ENCODE measurements at regions of chr7 and their contacts with region 1.

Region 1: DNA sequence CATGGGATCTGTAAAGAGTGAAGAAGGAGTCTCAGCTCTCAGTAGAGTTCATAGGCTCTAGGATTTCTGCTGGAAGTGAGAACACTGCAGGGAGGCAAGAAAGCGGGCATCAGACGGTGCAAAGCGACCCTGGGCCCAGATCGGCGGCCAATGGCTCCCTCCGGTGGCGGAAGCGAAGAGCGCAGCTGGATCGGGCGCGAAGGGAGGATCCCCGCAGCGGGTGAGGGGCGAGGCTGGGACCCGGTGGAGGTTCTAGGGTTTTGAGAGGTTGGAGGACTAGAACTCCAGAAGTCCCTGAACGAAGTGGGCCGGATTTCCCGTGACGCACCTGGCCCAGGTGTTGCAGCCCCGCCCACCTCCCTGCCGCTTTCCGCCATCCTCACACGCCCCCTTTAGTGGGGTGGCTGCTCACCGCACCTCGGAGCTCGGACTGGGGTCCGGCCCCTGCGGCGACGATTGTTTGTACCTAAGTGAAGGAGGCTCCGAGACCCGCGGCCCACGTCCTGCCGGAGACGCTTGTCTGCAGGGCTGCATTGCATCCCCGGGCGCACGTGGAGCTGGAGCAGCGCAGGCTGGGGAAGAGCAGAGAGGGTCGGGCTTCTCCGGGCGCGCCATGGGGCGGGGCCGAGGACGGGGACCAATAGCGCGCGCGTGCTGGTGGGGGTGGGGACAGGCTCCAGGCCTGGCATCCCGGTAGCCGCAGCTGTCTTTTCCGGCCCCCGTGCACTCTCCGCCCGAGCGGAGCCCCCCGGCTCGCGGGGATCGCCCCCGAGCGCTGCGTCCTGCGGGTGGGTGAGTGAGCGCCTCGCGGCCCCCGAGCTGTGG is at the start of gene SLC12A9:
- DNase-seq: peak; percentile 93
- H3K4me3 ChIP-seq: peak within 1 kb of the TSS; percentile 79
- H3K27ac ChIP-seq: peak within 1 kb of the TSS; percentile 60
- H3K4me1 ChIP-seq: no peaks in the 10 kb centered on the region
- H3K27me3 ChIP-seq: no peaks in the 10 kb centered on the region
- CTCF ChIP-seq: peak; percentile 87
- total RNA-seq, gene SLC12A9: 24.1 to 35.9 TPM

Region 2: GRCh38 chr7:100705753-100706671 is 146.2 kb before region 1 on chr7 and contains the start of gene POP7:
- intact Hi-C with region 1: loop called (anchors 5 kb)
- DNase-seq: peak; percentile 99
- H3K4me3 ChIP-seq: peak within 1 kb of the TSS; percentile 62
- H3K27ac ChIP-seq: peak within 1 kb of the TSS; percentile 90
- H3K4me1 ChIP-seq: peaks cover 10% of the 10 kb centered on the region
- H3K27me3 ChIP-seq: no peaks in the 10 kb centered on the region
- CTCF ChIP-seq: no peak
- total RNA-seq, gene POP7: 28.8 to 43.4 TPM

Region 3: GRCh38 chr7:100799014-100799896 is 53.0 kb before region 1 on chr7:
- intact Hi-C with region 1: loop called (anchors 1 kb)
- DNase-seq: peak; percentile 79
- H3K4me3 ChIP-seq: no peak overlapping the region
- H3K27ac ChIP-seq: no peak overlapping the region
- H3K4me1 ChIP-seq: peaks cover 27% of the 10 kb centered on the region
- H3K27me3 ChIP-seq: no peaks in the 10 kb centered on the region
- CTCF ChIP-seq: peak; percentile 76